Calu3 (cell line): ENCODE measurements at regions of chr13 and their contacts with region 1.

Region 1: DNA sequence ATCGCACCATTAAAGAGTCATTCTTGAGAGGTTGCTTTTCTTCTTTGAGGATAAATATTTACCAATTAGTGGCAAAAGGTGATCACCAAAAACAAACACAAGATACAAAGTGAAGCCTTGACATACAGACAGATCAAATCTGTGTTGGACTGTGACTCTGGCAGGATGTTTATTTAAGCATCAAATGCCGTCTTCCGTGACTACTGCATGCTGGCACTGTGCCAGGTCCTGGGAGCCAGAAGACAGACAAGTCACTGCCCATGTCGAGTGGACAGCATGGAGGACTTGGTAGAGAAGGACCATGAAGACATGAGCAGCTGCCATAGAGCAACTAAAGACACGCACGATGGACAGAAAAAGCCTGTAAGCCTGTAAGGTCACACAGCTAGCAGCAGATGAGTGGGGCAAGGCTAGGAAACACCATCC is 92.8 kb upstream of the FARP1 start:
- DNase-seq: peak; percentile 24
- H3K4me3 Mint-ChIP-seq: no peak overlapping the region
- H3K27ac Mint-ChIP-seq: no peak overlapping the region
- H3K4me1 Mint-ChIP-seq: no peaks in the 10 kb centered on the region
- H3K27me3 Mint-ChIP-seq: no peaks in the 10 kb centered on the region
- CTCF ChIP-seq: no peak

Region 2: GRCh38 chr13:98214008-98214643 is 164.1 kb after region 1 on chr13:
- CTCF ChIA-PET with region 1: no interaction called
- intact Hi-C with region 1: loop called (anchors 5 kb)
- DNase-seq: no peak
- H3K4me3 Mint-ChIP-seq: no peak overlapping the region
- H3K27ac Mint-ChIP-seq: no peak overlapping the region
- H3K4me1 Mint-ChIP-seq: no peaks in the 10 kb centered on the region
- H3K27me3 Mint-ChIP-seq: no peaks in the 10 kb centered on the region
- CTCF ChIP-seq: no peak